Activated B cell treated with CpG ODN at 0.5 μM for 24 hours (primary cell): ENCODE measurements at regions of chr17 and their contacts with region 1.

Region 1: DNA sequence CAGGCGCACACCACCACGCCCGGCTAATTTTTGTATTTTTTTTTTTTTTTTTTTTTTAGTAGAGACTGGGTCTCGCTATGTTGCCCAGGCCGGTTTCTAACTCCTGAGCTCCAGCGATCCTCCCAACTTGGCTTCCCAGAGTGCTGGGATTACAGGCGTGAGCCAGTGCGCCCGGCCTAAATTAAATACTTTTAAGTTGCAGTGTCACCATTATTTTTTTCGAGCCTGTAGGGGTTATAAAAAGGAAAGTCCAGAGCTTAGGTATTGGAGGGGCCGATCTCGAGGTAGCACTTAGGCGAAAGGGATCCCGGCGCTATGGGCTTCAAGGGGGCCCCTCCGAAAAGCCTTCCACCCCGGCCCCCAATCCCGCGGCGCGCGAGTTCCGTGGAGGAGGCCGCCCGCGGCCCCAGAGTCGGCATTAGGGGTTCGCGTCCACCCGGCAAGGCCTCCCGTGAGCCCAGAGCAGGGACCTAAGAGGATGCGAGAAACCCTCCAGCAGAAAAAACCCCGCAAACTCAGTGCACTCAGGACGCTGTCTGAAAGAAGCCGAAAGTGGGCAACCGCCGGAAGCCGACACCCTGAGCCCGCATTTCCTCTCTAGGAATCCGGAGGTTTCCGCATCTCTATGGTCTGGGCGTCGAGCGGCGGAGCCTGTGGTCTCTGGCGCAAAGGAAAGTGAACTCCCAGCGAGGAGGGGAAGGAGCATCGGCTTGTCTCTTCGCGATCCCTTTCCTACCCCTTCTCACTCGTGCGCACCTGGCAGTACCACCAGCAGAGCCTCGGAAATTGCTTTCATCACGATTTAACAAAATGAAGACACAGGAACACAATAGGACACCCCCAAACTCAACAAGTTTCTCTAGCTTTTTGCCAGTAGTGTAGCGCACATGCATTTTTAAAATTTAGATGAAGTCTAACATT is 14.1 kb upstream of the RGS9 start:
- DNase-seq: peak; percentile 64
- ATAC-seq: peak; percentile 85
- H3K4me3 Mint-ChIP-seq: peak overlapping the region; percentile 87
- H3K27ac Mint-ChIP-seq: peak overlapping the region; percentile 96
- H3K4me1 Mint-ChIP-seq: peaks cover 18% of the 10 kb centered on the region
- H3K27me3 Mint-ChIP-seq: peaks cover 5% of the 10 kb centered on the region
- CTCF ChIP-seq: no peak

Region 2: GRCh38 chr17:65137021-65137991 is 14.2 kb after region 1 on chr17 and contains the start of gene RGS9:
- CTCF ChIA-PET with region 1: interaction called, 6 read pairs
- POLR2A ChIA-PET with region 1: interaction called, 12 read pairs
- intact Hi-C with region 1: loop called (anchors 1 kb)
- DNase-seq: peak; percentile 84
- ATAC-seq: peak; percentile 91
- H3K4me3 Mint-ChIP-seq: peak within 1 kb of the TSS; percentile 81
- H3K27ac Mint-ChIP-seq: peak within 1 kb of the TSS; percentile 65
- H3K4me1 Mint-ChIP-seq: peaks cover 20% of the 10 kb centered on the region
- H3K27me3 Mint-ChIP-seq: peaks cover 9% of the 10 kb centered on the region
- CTCF ChIP-seq: no peak
- total RNA-seq, gene RGS9: 3.2 TPM in 2 replicates